Naive thymus-derived CD4-positive, alpha-beta T cell (primary cell): ENCODE measurements at regions of chr3 and their contacts with region 1.

Region 1: GRCh38 chr3:196179380-196180308 is 31.6 kb downstream of the ZDHHC19 start:
- DNase-seq: peak; percentile 56 to 91 (median 87)
- ATAC-seq: peak; percentile 93
- H3K4me3 ChIP-seq: peak overlapping the region; percentile 41
- H3K4me3 Mint-ChIP-seq: peak overlapping the region; percentile 66 to 88 (median 72)
- H3K27ac ChIP-seq: peak overlapping the region; percentile 79
- H3K27ac Mint-ChIP-seq: peak overlapping the region; percentile 86 to 99 (median 93)
- H3K4me1 ChIP-seq: peaks cover 29 to 44% of the 10 kb centered on the region in 2 donors
- H3K4me1 Mint-ChIP-seq: peaks cover 16 to 62% (median 35%) of the 10 kb centered on the region in 7 donors
- H3K27me3 ChIP-seq: no peaks in the 10 kb centered on the region
- H3K27me3 Mint-ChIP-seq: no peaks in the 10 kb centered on the region

Region 2: GRCh38 chr3:195580744-195581443 is 598.8 kb before region 1 on chr3:
- CTCF ChIA-PET with region 1: no interaction called
- POLR2A ChIA-PET with region 1: no interaction called
- intact Hi-C with region 1: no loop called
- DNase-seq: no peak
- ATAC-seq: no peak
- H3K4me3 ChIP-seq: no peak overlapping the region
- H3K4me3 Mint-ChIP-seq: no peak overlapping the region
- H3K27ac ChIP-seq: no peak overlapping the region
- H3K27ac Mint-ChIP-seq: peak overlapping the region in 1 of 9 donors; percentile 27
- H3K4me1 ChIP-seq: no peaks in the 10 kb centered on the region
- H3K4me1 Mint-ChIP-seq: peaks cover 0 to 16% (median 5%) of the 10 kb centered on the region in 7 donors
- H3K27me3 ChIP-seq: no peaks in the 10 kb centered on the region
- H3K27me3 Mint-ChIP-seq: peaks cover 0 to 13% (median 0%) of the 10 kb centered on the region in 5 donors

Region 3: GRCh38 chr3:196111939-196112386 is 67.7 kb before region 1 on chr3:
- CTCF ChIA-PET with region 1: no interaction called
- POLR2A ChIA-PET with region 1: no interaction called
- intact Hi-C with region 1: loop called in 1 of 2 experiments (anchors 1 kb)
- DNase-seq: peak in 8 of 9 donors; percentile 18 to 56 (median 46)
- ATAC-seq: peak; percentile 89
- H3K4me3 ChIP-seq: no peak overlapping the region
- H3K4me3 Mint-ChIP-seq: peak overlapping the region in 4 of 10 donors; percentile 28 to 69 (median 32)
- H3K27ac ChIP-seq: no peak overlapping the region
- H3K27ac Mint-ChIP-seq: peak overlapping the region in 6 of 9 donors; percentile 26 to 93 (median 54)
- H3K4me1 ChIP-seq: peaks cover 0 to 9% of the 10 kb centered on the region in 2 donors
- H3K4me1 Mint-ChIP-seq: peaks cover 0 to 30% (median 10%) of the 10 kb centered on the region in 7 donors
- H3K27me3 ChIP-seq: no peaks in the 10 kb centered on the region
- H3K27me3 Mint-ChIP-seq: no peaks in the 10 kb centered on the region

Region 4: GRCh38 chr3:196159952-196160804 is 19.5 kb before region 1 on chr3:
- CTCF ChIA-PET with region 1: no interaction called
- POLR2A ChIA-PET with region 1: interaction called, 4 read pairs
- intact Hi-C with region 1: loop called in 1 of 2 experiments (anchors 1 kb)
- DNase-seq: peak in 3 of 9 donors; percentile 14 to 47 (median 14)
- ATAC-seq: peak; percentile 86
- H3K4me3 ChIP-seq: no peak overlapping the region
- H3K4me3 Mint-ChIP-seq: peak overlapping the region in 1 of 10 donors; percentile 72
- H3K27ac ChIP-seq: no peak overlapping the region
- H3K27ac Mint-ChIP-seq: peak overlapping the region in 2 of 9 donors; percentile 41 to 89
- H3K4me1 ChIP-seq: peaks cover 0 to 4% of the 10 kb centered on the region in 2 donors
- H3K4me1 Mint-ChIP-seq: peaks cover 6 to 39% (median 8%) of the 10 kb centered on the region in 7 donors
- H3K27me3 ChIP-seq: no peaks in the 10 kb centered on the region
- H3K27me3 Mint-ChIP-seq: no peaks in the 10 kb centered on the region

Region 5: DNA sequence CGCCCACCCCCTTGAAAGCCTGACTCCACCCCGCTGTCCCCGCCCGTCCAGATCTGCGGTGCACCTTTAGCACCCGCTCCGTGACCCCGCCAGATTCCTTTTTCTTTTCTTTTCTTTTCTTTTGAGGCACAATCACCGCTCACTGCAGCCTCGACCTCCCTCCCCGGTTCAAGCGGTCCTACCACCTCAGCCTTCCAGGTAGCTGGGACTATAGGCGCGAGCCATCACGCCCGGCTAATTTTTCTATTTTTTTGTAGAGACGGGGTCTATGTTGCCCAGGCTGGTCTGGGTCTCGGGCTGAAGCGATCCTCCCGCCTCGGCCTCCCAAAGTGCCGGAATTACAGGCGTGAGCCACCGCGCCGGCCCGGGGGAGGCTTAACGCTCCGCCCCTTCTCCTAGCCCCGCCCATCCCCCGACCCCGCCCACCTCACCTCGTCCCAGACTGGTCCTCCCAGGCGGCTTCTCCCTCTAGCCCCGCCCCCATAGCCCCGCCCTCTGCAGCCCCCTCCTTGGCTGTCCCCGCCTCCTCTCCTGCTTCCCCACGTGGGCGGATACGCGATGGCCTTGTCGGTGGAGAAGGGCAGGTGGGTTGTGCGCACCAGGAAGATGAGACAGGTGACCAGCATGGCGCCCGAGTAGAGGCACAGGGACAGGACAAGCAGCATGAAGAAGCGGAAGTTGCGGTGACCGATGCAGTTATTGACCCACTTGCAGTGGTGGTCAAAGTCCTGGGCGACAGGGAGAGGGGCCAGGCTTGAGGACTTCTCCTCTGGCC is 28.4 kb after region 1 on chr3:
- CTCF ChIA-PET with region 1: no interaction called
- POLR2A ChIA-PET with region 1: interaction called, 4 read pairs
- intact Hi-C with region 1: loop called in 1 of 2 experiments (anchors 1 kb)
- DNase-seq: peak in 8 of 9 donors; percentile 31 to 76 (median 48)
- ATAC-seq: peak; percentile 81
- H3K4me3 ChIP-seq: peak overlapping the region; percentile 56
- H3K4me3 Mint-ChIP-seq: peak overlapping the region; percentile 68 to 89 (median 86)
- H3K27ac ChIP-seq: no peak overlapping the region
- H3K27ac Mint-ChIP-seq: peak overlapping the region in 8 of 9 donors; percentile 32 to 86 (median 56)
- H3K4me1 ChIP-seq: peaks cover 0 to 3% of the 10 kb centered on the region in 2 donors
- H3K4me1 Mint-ChIP-seq: peaks cover 5 to 24% (median 12%) of the 10 kb centered on the region in 7 donors
- H3K27me3 ChIP-seq: no peaks in the 10 kb centered on the region
- H3K27me3 Mint-ChIP-seq: peaks cover 0 to 31% (median 0%) of the 10 kb centered on the region in 5 donors